ENCODE measurements at regions of chr2 and their contacts with region 1.

Region 1: GRCh38 chr2:173239644-173240043 is 115.0 kb upstream of the CDCA7 start:
- DNase-seq: no peak

Region 2: DNA sequence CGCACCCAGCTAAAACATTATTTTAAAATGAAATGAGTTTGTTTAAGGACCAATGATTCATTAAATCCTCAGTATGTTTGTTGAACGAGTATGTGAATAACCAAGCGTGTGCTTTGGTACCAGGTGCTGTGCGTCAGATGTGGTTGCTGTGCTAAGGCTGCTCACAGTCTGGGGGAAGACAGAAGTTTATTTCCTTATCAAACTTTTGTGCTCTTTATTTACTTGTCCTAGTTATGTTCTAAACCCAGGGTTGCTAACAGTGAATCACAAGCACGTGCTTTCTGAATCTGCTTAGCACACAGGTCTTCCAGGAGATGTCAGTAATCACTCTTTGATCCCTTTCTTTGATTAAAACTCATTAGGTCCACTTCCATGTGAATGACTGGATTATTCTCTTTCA is 467.0 kb before region 1 on chr2:
- in situ Hi-C with region 1: no loop called
- DNase-seq: peak; percentile 41

Region 3: GRCh38 chr2:173002751-173003541 is 236.7 kb before region 1 on chr2:
- in situ Hi-C with region 1: loop called (anchors 10 kb)
- DNase-seq: no peak

Measured in Caki2 (cell line).